ENCODE measurements at regions of chr3 and their contacts with region 1.

Region 1: GRCh38 chr3:59857589-59858346 is 807.9 kb upstream of the CFAP20DC start:
- ATAC-seq: peak; percentile 59 to 100 (median 88)
- H3K4me3 ChIP-seq: no peak overlapping the region
- H3K27ac ChIP-seq: no peak overlapping the region
- H3K4me1 ChIP-seq: peaks cover 16 to 22% of the 10 kb centered on the region in 2 donors

Region 2: DNA sequence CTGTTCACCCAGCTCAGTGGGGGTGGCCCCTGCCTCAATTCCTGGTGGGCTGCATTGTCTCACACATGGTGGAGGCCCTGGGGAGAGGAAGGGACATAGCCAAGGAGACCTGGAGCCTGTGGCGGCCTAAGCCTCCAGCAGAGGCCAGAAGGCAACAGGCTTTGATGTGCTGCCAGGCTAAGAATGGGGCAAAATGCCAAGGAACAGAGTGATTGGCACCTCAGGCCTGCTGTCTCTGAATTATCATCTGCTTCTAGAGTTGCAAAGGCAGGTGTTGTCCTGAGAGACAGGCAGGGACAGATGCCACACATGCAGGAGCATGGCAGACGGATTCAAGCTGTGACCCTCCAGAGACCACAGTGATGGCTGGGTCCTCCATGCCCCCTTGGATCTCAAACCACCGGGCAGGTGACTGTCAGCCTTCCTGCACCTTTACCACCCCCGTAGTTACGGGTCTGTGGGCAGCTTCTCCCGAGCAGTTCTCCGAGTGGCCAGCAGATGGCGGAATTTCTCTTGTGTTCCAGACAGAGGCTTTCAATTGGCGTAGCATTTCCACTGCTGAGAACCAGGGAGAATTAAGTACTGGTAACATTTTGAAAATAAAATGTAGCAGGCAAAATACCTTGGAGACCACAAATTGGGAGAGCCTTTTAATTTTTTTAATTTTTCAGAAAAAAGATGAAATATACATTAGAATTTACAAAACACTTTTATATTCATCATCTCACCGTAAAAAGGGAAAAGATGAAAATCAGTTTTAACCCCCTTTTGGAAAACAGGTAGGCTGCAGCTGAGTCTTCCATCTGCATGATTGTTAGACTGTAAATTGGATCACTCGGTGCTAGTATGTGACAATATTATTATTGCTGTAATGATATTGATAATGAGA is 282.4 kb before region 1 on chr3:
- in situ Hi-C with region 1: loop called in 3 of 9 experiments (anchors 25 kb)
- ATAC-seq: peak; percentile 49 to 88 (median 82)
- H3K4me3 ChIP-seq: no peak overlapping the region
- H3K27ac ChIP-seq: no peak overlapping the region
- H3K4me1 ChIP-seq: peaks cover 0 to 3% of the 10 kb centered on the region in 2 donors

Region 3: GRCh38 chr3:60339304-60339703 is 481.5 kb after region 1 on chr3:
- in situ Hi-C with region 1: no loop called
- ATAC-seq: peak in 1 of 8 experiments; percentile 54
- H3K4me3 ChIP-seq: no peak overlapping the region
- H3K27ac ChIP-seq: no peak overlapping the region
- H3K4me1 ChIP-seq: no peaks in the 10 kb centered on the region

Region 4: DNA sequence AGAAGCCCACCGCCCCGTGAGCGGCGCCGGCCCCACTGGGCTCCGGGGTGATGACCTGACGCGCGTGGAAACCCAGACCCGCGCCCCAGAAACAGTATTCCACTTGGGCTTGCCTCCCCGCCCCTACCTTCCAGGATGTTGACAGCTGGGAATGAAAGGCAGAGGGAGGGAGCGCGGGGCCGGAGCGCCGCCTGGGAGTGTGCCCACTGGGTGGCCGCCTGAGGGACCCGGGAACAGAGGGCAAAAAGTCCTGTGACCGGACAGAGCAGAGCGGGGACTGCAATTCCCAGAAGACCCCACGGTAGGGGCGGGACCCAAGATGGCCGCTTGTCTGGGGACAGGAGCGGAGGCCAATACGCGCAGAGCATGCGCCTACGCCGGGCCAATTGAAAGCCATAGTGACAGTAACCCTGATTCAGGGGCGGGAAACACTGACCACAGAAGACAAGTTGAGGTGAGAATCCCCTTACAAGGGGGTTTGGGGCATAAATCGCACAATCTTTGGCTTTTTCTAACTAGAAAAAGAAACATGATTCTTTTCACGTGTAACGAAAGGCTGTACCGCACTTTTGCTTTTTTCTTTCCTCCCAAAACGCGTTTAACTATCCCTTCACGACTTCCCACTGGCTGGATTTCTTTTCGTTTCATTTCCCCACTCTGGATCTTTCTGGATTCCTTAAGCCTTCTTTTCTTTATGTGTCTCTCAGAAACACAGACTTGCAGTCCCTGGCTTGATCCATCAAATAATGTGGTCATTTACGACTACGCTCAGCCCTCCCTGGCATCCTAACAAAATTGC is 1393.6 kb after region 1 on chr3 and contains the start of gene FHIT:
- in situ Hi-C with region 1: no loop called
- ATAC-seq: peak; percentile 94 to 100 (median 98)
- H3K4me3 ChIP-seq: peak within 1 kb of the TSS; percentile 34 to 47 (median 41)
- H3K27ac ChIP-seq: no peak within 1 kb of the TSS
- H3K4me1 ChIP-seq: peaks cover 16 to 20% of the 10 kb centered on the region in 2 donors
- total RNA-seq, gene FHIT: 1.6 to 25.1 (median 12.1) TPM

Measured in motor neuron (in vitro differentiated cells).